Heart left ventricle (tissue), 16 donors: ENCODE measurements at regions of chr12 and their contacts with region 1.

Region 1: GRCh38 chr12:14948672-14949071 is 10.3 kb upstream of the ERP27 start:
- DNase-seq: peak in 2 of 5 donors; percentile 36 to 39
- ATAC-seq: peak; percentile 73 to 93 (median 88)
- H3K4me3 ChIP-seq: peak overlapping the region in 3 of 12 donors; percentile 2 to 17 (median 4)
- H3K27ac ChIP-seq: peak overlapping the region; percentile 15 to 92 (median 76)
- H3K4me1 ChIP-seq: peaks cover 5 to 79% (median 50%) of the 10 kb centered on the region in 12 donors
- H3K27me3 ChIP-seq: no peaks in the 10 kb centered on the region
- CTCF ChIP-seq: no peak
- POLR2A ChIP-seq: peak in 1 of 2 donors; percentile 55

Region 2: GRCh38 chr12:14892726-14893505 is 55.8 kb before region 1 on chr12:
- intact Hi-C with region 1: loop called in 1 of 10 experiments (anchors 5 kb)
- DNase-seq: peak in 4 of 5 donors; percentile 45 to 59 (median 50)
- ATAC-seq: peak; percentile 77 to 88 (median 84)
- H3K4me3 ChIP-seq: peak overlapping the region in 2 of 12 donors; percentile 12 to 17
- H3K27ac ChIP-seq: peak overlapping the region; percentile 17 to 90 (median 74)
- H3K4me1 ChIP-seq: peaks cover 0 to 46% (median 17%) of the 10 kb centered on the region in 12 donors
- H3K27me3 ChIP-seq: no peaks in the 10 kb centered on the region
- CTCF ChIP-seq: peak in 6 of 12 donors; percentile 9 to 39 (median 28)
- POLR2A ChIP-seq: no peak

Region 3: DNA sequence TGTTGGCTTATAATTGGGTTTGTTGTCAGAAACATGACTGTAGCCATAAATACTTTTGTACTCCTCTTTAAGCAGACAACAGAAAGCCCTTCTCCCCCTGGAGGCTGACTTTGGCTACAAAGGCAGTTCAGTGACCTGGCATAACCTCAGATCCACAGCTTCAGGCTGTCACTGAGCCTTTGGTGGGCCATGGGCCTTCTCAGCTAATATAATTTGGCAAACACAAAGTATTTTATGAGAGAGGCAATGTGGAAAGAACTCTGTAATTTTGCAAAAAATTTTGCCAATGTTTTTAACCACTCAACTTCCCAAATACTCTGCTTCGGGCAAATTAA is 47.5 kb before region 1 on chr12:
- intact Hi-C with region 1: loop called in 3 of 10 experiments (anchors 5 kb)
- DNase-seq: peak in 4 of 5 donors; percentile 25 to 56 (median 40)
- ATAC-seq: peak in 2 of 4 donors; percentile 57 to 58
- H3K4me3 ChIP-seq: no peak overlapping the region
- H3K27ac ChIP-seq: peak overlapping the region in 9 of 12 donors; percentile 2 to 77 (median 40)
- H3K4me1 ChIP-seq: peaks cover 0 to 70% (median 41%) of the 10 kb centered on the region in 12 donors
- H3K27me3 ChIP-seq: no peaks in the 10 kb centered on the region
- CTCF ChIP-seq: peak in 7 of 12 donors; percentile 13 to 47 (median 35)
- POLR2A ChIP-seq: no peak

Region 4: GRCh38 chr12:14913381-14913781 is 35.3 kb before region 1 on chr12:
- intact Hi-C with region 1: loop called in 2 of 10 experiments (anchors 5 kb)
- DNase-seq: peak in 3 of 5 donors; percentile 33 to 61 (median 59)
- ATAC-seq: peak in 3 of 4 donors; percentile 73 to 91 (median 75)
- H3K4me3 ChIP-seq: no peak overlapping the region
- H3K27ac ChIP-seq: peak overlapping the region in 4 of 12 donors; percentile 0 to 56 (median 21)
- H3K4me1 ChIP-seq: peaks cover 0 to 8% (median 0%) of the 10 kb centered on the region in 12 donors
- H3K27me3 ChIP-seq: no peaks in the 10 kb centered on the region
- CTCF ChIP-seq: no peak
- POLR2A ChIP-seq: no peak

Region 5: DNA sequence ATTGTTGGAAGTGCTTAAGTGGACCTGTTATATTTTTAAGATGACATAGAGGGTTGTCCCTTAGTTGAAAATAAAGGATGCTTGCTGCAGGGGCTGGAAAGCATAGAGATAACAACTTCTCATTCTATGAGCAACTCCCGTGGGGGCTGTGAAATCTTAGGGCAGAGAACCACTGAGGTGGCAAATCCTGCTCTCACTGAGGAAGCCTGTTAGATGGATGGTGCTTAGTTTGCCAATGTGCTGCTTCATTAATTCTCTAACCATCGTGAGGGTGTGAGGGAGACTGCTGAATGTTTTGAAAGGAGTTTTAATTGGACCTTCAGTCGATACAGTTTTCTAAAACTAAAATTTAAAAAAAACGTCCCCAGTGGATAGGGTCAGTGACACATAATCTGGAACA is 420.1 kb after region 1 on chr12:
- intact Hi-C with region 1: no loop called
- DNase-seq: no peak
- ATAC-seq: no peak
- H3K4me3 ChIP-seq: no peak overlapping the region
- H3K27ac ChIP-seq: no peak overlapping the region
- H3K4me1 ChIP-seq: no peaks in the 10 kb centered on the region
- H3K27me3 ChIP-seq: peaks cover 0 to 4% (median 0%) of the 10 kb centered on the region in 9 donors
- CTCF ChIP-seq: no peak
- POLR2A ChIP-seq: no peak